ENCODE measurements at regions of chr20 and their contacts with region 1.

Region 1: GRCh38 chr20:32484958-32485769 is 100.0 kb downstream of the NOL4L start:
- DNase-seq: peak; percentile 71 to 93 (median 84)
- ATAC-seq: peak; percentile 81
- H3K4me3 ChIP-seq: peak overlapping the region; percentile 75
- H3K4me3 Mint-ChIP-seq: peak overlapping the region; percentile 97
- H3K27ac ChIP-seq: peak overlapping the region; percentile 44 to 61
- H3K27ac Mint-ChIP-seq: peak overlapping the region; percentile 88
- H3K4me1 ChIP-seq: peaks cover 54% of the 10 kb centered on the region
- H3K4me1 Mint-ChIP-seq: peaks cover 54% of the 10 kb centered on the region
- H3K27me3 ChIP-seq: no peaks in the 10 kb centered on the region
- H3K27me3 Mint-ChIP-seq: no peaks in the 10 kb centered on the region
- CTCF ChIP-seq: peak; percentile 78

Region 2: GRCh38 chr20:31943052-31943471 is 542.1 kb before region 1 on chr20:
- CTCF ChIA-PET with region 1: no interaction called
- POLR2A ChIA-PET with region 1: no interaction called
- intact Hi-C with region 1: no loop called
- DNase-seq: no peak
- ATAC-seq: no peak
- H3K4me3 ChIP-seq: no peak overlapping the region
- H3K4me3 Mint-ChIP-seq: no peak overlapping the region
- H3K27ac ChIP-seq: no peak overlapping the region
- H3K27ac Mint-ChIP-seq: no peak overlapping the region
- H3K4me1 ChIP-seq: no peaks in the 10 kb centered on the region
- H3K4me1 Mint-ChIP-seq: no peaks in the 10 kb centered on the region
- H3K27me3 ChIP-seq: no peaks in the 10 kb centered on the region
- H3K27me3 Mint-ChIP-seq: no peaks in the 10 kb centered on the region
- CTCF ChIP-seq: no peak

Region 3: GRCh38 chr20:32285621-32286371 is 199.4 kb before region 1 on chr20:
- CTCF ChIA-PET with region 1: no interaction called
- POLR2A ChIA-PET with region 1: no interaction called
- intact Hi-C with region 1: loop called in 1 of 2 experiments (anchors 5 kb)
- DNase-seq: peak in 9 of 14 experiments; percentile 2 to 77 (median 12)
- ATAC-seq: peak; percentile 78
- H3K4me3 ChIP-seq: peak overlapping the region; percentile 1
- H3K4me3 Mint-ChIP-seq: peak overlapping the region; percentile 26
- H3K27ac ChIP-seq: peak overlapping the region; percentile 32 to 57
- H3K27ac Mint-ChIP-seq: peak overlapping the region; percentile 74
- H3K4me1 ChIP-seq: peaks cover 25% of the 10 kb centered on the region
- H3K4me1 Mint-ChIP-seq: peaks cover 37% of the 10 kb centered on the region
- H3K27me3 ChIP-seq: no peaks in the 10 kb centered on the region
- H3K27me3 Mint-ChIP-seq: no peaks in the 10 kb centered on the region
- CTCF ChIP-seq: no peak

Region 4: GRCh38 chr20:32445539-32446273 is 39.5 kb before region 1 on chr20:
- CTCF ChIA-PET with region 1: interaction called, 4 read pairs
- POLR2A ChIA-PET with region 1: interaction called, 4 read pairs
- intact Hi-C with region 1: loop called in 1 of 2 experiments (anchors 5 kb)
- DNase-seq: peak in 4 of 14 experiments; percentile 0 to 31 (median 22)
- ATAC-seq: no peak
- H3K4me3 ChIP-seq: no peak overlapping the region
- H3K4me3 Mint-ChIP-seq: no peak overlapping the region
- H3K27ac ChIP-seq: no peak overlapping the region
- H3K27ac Mint-ChIP-seq: peak overlapping the region; percentile 65
- H3K4me1 ChIP-seq: peaks cover 15% of the 10 kb centered on the region
- H3K4me1 Mint-ChIP-seq: peaks cover 28% of the 10 kb centered on the region
- H3K27me3 ChIP-seq: no peaks in the 10 kb centered on the region
- H3K27me3 Mint-ChIP-seq: no peaks in the 10 kb centered on the region
- CTCF ChIP-seq: no peak

Region 5: DNA sequence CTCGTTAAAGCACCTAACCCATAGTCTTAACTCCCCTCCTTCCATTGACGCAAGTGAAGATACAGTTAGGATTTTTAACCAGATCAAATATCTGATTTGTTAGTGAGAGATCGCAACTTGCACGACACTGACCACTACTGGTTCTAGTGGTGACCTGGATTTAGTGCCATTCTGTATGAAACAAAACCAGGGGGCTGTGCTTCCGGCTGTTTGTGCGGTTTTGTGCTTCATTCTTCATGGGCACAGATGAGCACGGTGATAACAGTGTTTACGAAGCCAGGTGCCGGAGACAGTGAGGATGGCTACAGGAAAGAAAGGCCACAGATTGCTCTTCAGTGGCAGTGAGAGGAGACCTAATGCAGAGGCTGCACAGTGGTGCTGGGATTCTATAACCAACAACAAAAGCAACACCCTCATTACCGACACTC is 24.5 kb after region 1 on chr20:
- CTCF ChIA-PET with region 1: interaction called, 8 read pairs
- POLR2A ChIA-PET with region 1: interaction called, 48 read pairs
- intact Hi-C with region 1: loop called (anchors 1 kb)
- DNase-seq: peak; percentile 51 to 89 (median 67)
- ATAC-seq: peak; percentile 83
- H3K4me3 ChIP-seq: peak overlapping the region; percentile 60
- H3K4me3 Mint-ChIP-seq: peak overlapping the region; percentile 88
- H3K27ac ChIP-seq: peak overlapping the region; percentile 75 to 83
- H3K27ac Mint-ChIP-seq: peak overlapping the region; percentile 96
- H3K4me1 ChIP-seq: peaks cover 85% of the 10 kb centered on the region
- H3K4me1 Mint-ChIP-seq: peaks cover 83% of the 10 kb centered on the region
- H3K27me3 ChIP-seq: no peaks in the 10 kb centered on the region
- H3K27me3 Mint-ChIP-seq: no peaks in the 10 kb centered on the region
- CTCF ChIP-seq: peak; percentile 17

Measured in CD4-positive, alpha-beta T cell (primary cell).